Activated naive CD4-positive, alpha-beta T cell treated with anti-CD3 and anti-CD28 coated beads for 36 hours (primary cell): ENCODE measurements at regions of chr17 and their contacts with region 1.

Region 1: DNA sequence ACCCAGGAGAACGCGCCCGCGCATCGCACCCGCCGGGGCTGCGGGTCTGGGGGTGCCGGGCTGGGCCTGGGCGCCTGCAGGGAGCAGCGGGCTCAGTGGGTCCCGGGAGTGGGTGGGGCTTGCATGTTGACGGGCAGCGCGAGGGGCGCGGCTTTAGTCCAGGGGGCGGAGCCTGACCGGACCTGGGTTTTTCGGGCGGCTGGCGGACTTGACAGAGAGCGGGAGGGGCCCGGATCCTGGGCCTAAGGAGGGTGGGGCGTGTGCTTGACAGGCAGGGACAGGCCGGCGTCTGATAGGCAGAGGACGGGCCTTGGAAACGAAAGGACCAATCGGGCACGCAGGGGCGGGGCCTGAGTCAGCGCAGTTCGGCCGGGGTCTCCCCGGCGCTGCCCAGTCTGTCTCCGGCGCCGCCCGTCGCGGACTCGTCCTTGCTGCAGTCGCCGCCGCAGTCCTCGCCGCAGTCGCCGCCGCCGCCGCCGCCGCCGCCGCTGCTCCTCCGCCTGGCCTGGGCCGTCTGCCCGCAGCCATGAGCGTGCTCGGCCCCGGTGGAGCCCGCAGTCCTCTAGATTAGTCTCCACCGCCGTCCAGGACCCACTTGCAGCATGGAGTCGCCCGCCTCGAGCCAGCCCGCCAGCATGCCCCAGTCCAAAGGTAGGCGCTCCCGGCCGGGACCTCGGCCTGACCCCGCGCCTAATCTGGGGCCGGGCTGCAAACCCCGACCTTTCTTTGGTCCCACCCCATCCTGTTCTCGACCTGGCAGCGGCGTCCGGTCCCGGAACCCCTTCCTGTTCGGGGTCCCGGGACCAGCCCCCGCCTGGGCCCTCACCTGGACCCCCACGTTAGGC is at the start of gene MAP2K3:
- DNase-seq: peak; percentile 97
- H3K4me3 Mint-ChIP-seq: peak within 1 kb of the TSS; percentile 100
- H3K27ac Mint-ChIP-seq: peak within 1 kb of the TSS; percentile 95
- H3K4me1 Mint-ChIP-seq: peaks cover 62% of the 10 kb centered on the region
- H3K27me3 Mint-ChIP-seq: no peaks in the 10 kb centered on the region
- total RNA-seq, gene MAP2K3: 87.0 to 87.2 TPM

Region 2: DNA sequence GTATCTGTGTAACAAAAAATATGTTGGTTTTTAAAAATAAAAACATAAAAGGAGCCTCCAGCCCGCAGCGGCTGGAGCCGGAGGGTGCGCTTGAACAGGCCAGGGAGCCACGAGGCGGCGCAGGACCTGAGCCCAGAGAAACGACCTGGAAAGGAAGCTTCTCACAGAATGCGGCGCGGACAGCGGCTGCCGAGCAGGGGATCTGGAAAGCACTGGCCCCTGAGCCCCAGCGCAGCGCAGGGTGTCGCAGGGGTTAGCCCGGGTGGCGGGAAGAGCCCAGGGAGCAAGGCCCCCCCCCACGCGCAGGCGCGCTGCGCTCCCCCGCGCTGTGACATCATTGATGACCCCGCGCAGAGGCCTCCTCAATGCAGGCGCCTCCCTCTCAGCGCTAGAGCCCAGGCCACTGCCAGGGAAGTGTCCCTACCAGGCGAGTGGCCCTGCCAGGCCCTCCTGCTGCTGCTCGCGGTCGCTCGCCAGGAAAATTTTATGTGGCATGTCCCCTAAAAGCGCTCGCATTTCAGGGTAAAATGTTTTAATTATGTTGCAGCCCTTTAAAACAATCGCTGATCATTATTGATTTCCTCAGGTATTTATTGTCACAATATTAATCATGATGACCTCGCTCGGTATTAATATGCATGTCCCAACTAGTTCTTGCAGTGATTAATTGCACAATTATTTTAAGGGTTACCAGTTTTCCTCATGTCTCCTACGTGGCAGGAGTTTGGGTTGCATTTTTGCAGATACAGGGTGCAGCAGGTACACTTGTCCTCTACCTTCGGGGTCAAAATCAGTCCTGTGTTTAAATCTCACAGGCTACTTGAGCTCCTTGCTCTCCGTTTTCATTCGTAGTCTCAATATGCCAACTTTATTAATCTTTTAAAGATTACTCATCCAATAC is 375.9 kb before region 1 on chr17:
- CTCF ChIA-PET with region 1: no interaction called
- intact Hi-C with region 1: loop called (anchors 5 kb)
- DNase-seq: peak; percentile 88
- H3K4me3 Mint-ChIP-seq: peak overlapping the region; percentile 78
- H3K27ac Mint-ChIP-seq: peak overlapping the region; percentile 65
- H3K4me1 Mint-ChIP-seq: peaks cover 5% of the 10 kb centered on the region
- H3K27me3 Mint-ChIP-seq: peaks cover 6% of the 10 kb centered on the region

Region 3: GRCh38 chr17:21119247-21119918 is 165.2 kb before region 1 on chr17:
- CTCF ChIA-PET with region 1: interaction called, 6 read pairs
- intact Hi-C with region 1: loop called (anchors 2 kb)
- DNase-seq: peak; percentile 83
- H3K4me3 Mint-ChIP-seq: peak overlapping the region; percentile 16
- H3K27ac Mint-ChIP-seq: no peak overlapping the region
- H3K4me1 Mint-ChIP-seq: peaks cover 6% of the 10 kb centered on the region
- H3K27me3 Mint-ChIP-seq: peaks cover 2% of the 10 kb centered on the region

Region 4: DNA sequence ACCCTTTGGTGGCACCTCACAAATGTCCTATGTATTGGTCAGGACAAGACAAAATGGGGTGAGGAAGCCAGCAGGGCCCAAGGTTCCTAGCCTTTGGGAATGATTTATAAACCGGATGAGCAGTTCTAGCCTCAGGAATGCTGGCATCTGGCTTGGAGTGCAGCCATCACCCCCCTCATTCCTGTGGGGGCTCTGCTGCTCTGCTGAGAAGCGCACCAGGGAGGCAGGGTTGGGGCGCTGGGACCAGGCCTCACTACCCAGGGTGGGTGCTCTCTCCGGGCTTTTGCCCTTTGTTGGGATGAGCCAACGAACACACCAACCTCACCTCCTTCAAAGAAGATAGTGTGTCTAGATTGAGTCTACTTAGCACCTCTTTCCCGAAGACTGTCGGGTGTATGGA is 109.8 kb before region 1 on chr17:
- CTCF ChIA-PET with region 1: no interaction called
- intact Hi-C with region 1: no loop called
- DNase-seq: no peak
- H3K4me3 Mint-ChIP-seq: no peak overlapping the region
- H3K27ac Mint-ChIP-seq: peak overlapping the region; percentile 53
- H3K4me1 Mint-ChIP-seq: peaks cover 15% of the 10 kb centered on the region
- H3K27me3 Mint-ChIP-seq: no peaks in the 10 kb centered on the region

Region 5: GRCh38 chr17:21252796-21253645 is 31.5 kb before region 1 on chr17 and contains the start of gene NATD1:
- CTCF ChIA-PET with region 1: interaction called, 6 read pairs
- intact Hi-C with region 1: loop called (anchors 1 kb)
- DNase-seq: peak; percentile 82
- H3K4me3 Mint-ChIP-seq: peak within 1 kb of the TSS; percentile 79
- H3K27ac Mint-ChIP-seq: no peak within 1 kb of the TSS
- H3K4me1 Mint-ChIP-seq: peaks cover 19% of the 10 kb centered on the region
- H3K27me3 Mint-ChIP-seq: no peaks in the 10 kb centered on the region
- total RNA-seq, gene NATD1: 2.1 to 2.5 TPM

Region 6: DNA sequence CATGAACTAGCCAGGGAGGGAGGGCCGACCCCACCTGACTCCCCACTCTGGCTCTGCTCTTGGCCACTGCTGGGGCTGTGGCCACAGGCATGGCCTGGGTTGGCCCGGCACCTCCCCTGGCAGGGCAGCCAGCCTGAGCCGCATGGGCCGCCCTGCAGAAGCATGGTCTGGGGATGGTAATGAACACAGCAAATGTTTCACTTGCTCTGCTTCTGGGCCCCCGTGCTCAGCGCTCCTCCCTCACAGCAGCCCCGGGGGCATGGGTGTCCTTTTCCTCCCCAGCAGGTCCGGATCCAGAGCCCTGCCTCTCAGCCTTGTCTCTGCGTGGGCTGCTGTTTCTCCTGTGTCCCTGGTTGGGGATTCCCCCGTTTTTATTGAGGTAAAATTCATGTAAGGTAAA is 60.7 kb after region 1 on chr17:
- CTCF ChIA-PET with region 1: no interaction called
- intact Hi-C with region 1: no loop called
- DNase-seq: no peak
- H3K4me3 Mint-ChIP-seq: no peak overlapping the region
- H3K27ac Mint-ChIP-seq: no peak overlapping the region
- H3K4me1 Mint-ChIP-seq: peaks cover 1% of the 10 kb centered on the region
- H3K27me3 Mint-ChIP-seq: no peaks in the 10 kb centered on the region

Region 7: DNA sequence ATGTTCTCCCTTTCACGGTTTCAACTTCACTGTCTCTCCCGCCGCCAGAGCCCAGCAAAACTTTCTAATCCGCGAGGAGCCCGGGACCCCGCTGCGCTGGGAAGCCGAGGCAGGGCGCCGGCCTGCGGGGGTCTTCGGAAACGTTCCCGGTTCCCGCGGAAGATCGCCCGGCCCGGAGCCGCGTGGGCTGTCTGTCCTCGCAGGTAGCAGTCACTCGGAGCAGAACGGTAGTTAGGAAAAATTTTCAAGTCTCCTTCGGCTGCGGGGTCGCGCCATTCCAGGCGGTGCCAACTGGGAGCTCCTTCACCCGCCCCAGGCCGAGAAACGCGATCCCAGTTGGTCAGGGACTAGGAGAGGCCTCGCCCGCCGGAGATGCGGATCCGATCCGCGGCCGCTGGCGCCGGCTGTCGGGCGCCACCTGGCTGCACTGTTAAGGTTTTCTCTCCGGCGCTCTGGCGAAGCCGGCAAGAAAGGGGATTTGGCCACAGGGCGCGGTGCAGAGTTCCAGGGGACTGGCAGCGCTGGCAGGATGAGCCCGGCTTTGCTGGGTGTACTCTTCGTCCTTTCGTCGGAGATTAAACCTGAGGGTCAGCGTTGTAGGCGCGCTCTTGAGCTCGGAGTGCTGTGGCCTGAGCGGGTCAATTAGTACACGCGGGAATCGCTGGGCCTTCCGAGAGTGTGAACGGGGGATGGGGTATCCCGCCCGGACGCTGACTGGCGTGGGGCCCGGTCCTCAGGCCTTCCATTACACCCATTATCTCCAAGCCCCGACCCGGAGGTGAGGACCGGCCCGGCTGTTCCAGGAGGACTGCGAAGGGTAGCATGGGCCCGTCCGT is 227.0 kb after region 1 on chr17:
- CTCF ChIA-PET with region 1: interaction called, 22 read pairs
- intact Hi-C with region 1: loop called (anchors 1 kb)
- DNase-seq: peak; percentile 73
- H3K4me3 Mint-ChIP-seq: peak overlapping the region; percentile 69
- H3K27ac Mint-ChIP-seq: no peak overlapping the region
- H3K4me1 Mint-ChIP-seq: peaks cover 9% of the 10 kb centered on the region
- H3K27me3 Mint-ChIP-seq: peaks cover 30% of the 10 kb centered on the region